MCF 10A (cell line): ENCODE measurements at regions of chr17 and their contacts with region 1.

Region 1: GRCh38 chr17:41548844-41549595 is 20.9 kb upstream of the KRT19 start:
- DNase-seq: peak; percentile 93
- H3K4me3 Mint-ChIP-seq: peak overlapping the region; percentile 47
- H3K27ac Mint-ChIP-seq: peak overlapping the region; percentile 78
- H3K4me1 Mint-ChIP-seq: peaks cover 44% of the 10 kb centered on the region
- H3K27me3 Mint-ChIP-seq: no peaks in the 10 kb centered on the region
- CTCF ChIP-seq: peak; percentile 63

Region 2: DNA sequence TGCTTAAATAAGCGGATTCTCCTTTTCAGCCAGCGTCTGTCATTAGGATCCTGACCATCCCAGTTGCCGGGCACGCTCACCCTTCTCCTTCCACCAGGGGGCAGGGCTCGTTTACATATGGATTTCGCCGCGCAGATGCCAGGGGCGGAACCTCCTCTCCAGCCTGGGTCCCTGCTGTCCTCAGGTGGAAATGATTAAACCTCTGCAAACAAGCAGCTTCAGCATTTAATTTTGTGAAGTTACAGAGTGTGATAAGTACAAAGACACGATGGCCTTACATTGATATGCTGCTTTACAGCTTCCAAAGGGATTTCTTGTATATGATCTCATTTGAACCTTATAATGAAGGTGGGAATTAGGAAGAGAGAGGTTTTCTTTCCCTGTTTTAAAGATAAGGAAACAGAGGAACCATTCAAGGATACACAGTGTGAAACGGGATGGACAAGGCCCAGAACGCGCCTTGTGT is 745.4 kb before region 1 on chr17:
- CTCF ChIA-PET with region 1: interaction called, 16 read pairs
- POLR2A ChIA-PET with region 1: no interaction called
- intact Hi-C with region 1: loop called (anchors 5 kb)
- DNase-seq: peak; percentile 84
- H3K4me3 Mint-ChIP-seq: no peak overlapping the region
- H3K27ac Mint-ChIP-seq: no peak overlapping the region
- H3K4me1 Mint-ChIP-seq: no peaks in the 10 kb centered on the region
- H3K27me3 Mint-ChIP-seq: no peaks in the 10 kb centered on the region
- CTCF ChIP-seq: peak; percentile 86

Region 3: DNA sequence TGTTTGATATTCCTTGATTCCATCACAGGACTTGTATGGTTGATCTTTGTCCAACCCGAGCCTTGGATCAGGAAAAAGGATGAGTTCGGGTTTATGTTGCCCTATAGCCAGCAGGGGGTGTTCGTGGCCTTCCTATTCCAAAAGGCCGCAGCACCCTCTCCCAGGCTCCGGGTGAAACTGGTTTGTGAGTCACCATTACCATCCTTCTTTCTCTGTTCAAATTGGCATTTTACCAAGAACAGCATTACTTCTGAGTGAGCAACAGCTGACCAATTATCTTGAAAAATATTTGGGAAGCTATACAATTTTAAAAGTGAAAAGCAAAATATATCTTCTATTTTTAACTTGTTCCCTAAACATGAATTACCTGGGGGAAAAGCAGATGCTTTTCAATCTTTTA is 639.7 kb before region 1 on chr17:
- CTCF ChIA-PET with region 1: interaction called, 48 read pairs
- POLR2A ChIA-PET with region 1: interaction called, 41 read pairs
- intact Hi-C with region 1: loop called (anchors 1 kb)
- DNase-seq: peak; percentile 96
- H3K4me3 Mint-ChIP-seq: peak overlapping the region; percentile 61
- H3K27ac Mint-ChIP-seq: peak overlapping the region; percentile 91
- H3K4me1 Mint-ChIP-seq: peaks cover 16% of the 10 kb centered on the region
- H3K27me3 Mint-ChIP-seq: no peaks in the 10 kb centered on the region
- CTCF ChIP-seq: peak; percentile 71

Region 4: GRCh38 chr17:41140360-41141132 is 408.5 kb before region 1 on chr17 and contains the start of gene KRTAP4-6:
- CTCF ChIA-PET with region 1: no interaction called
- POLR2A ChIA-PET with region 1: no interaction called
- intact Hi-C with region 1: no loop called
- DNase-seq: peak; percentile 49
- H3K4me3 Mint-ChIP-seq: no peak within 1 kb of the TSS
- H3K27ac Mint-ChIP-seq: peak within 1 kb of the TSS; percentile 3
- H3K4me1 Mint-ChIP-seq: peaks cover 6% of the 10 kb centered on the region
- H3K27me3 Mint-ChIP-seq: no peaks in the 10 kb centered on the region
- CTCF ChIP-seq: no peak
- total RNA-seq, gene KRTAP4-6: not detected in 2 replicates

Region 5: GRCh38 chr17:41496820-41497408 is 52.1 kb before region 1 on chr17:
- CTCF ChIA-PET with region 1: interaction called, 13 read pairs
- POLR2A ChIA-PET with region 1: interaction called, 3 read pairs
- intact Hi-C with region 1: loop called (anchors 1 kb)
- DNase-seq: peak; percentile 94
- H3K4me3 Mint-ChIP-seq: no peak overlapping the region
- H3K27ac Mint-ChIP-seq: peak overlapping the region; percentile 68
- H3K4me1 Mint-ChIP-seq: peaks cover 25% of the 10 kb centered on the region
- H3K27me3 Mint-ChIP-seq: no peaks in the 10 kb centered on the region
- CTCF ChIP-seq: peak; percentile 88

Region 6: GRCh38 chr17:41538565-41538991 is 10.4 kb before region 1 on chr17:
- CTCF ChIA-PET with region 1: interaction called, 44 read pairs
- POLR2A ChIA-PET with region 1: interaction called, 4 read pairs
- intact Hi-C with region 1: no loop called
- DNase-seq: peak; percentile 65
- H3K4me3 Mint-ChIP-seq: no peak overlapping the region
- H3K27ac Mint-ChIP-seq: no peak overlapping the region
- H3K4me1 Mint-ChIP-seq: peaks cover 34% of the 10 kb centered on the region
- H3K27me3 Mint-ChIP-seq: no peaks in the 10 kb centered on the region
- CTCF ChIP-seq: no peak

Region 7: GRCh38 chr17:41615454-41615853 is 66.4 kb after region 1 on chr17:
- CTCF ChIA-PET with region 1: interaction called, 22 read pairs
- POLR2A ChIA-PET with region 1: interaction called, 14 read pairs
- intact Hi-C with region 1: no loop called
- DNase-seq: peak; percentile 75
- H3K4me3 Mint-ChIP-seq: no peak overlapping the region
- H3K27ac Mint-ChIP-seq: peak overlapping the region; percentile 39
- H3K4me1 Mint-ChIP-seq: peaks cover 21% of the 10 kb centered on the region
- H3K27me3 Mint-ChIP-seq: no peaks in the 10 kb centered on the region
- CTCF ChIP-seq: no peak

Region 8: GRCh38 chr17:41665566-41666236 is 116.7 kb after region 1 on chr17:
- CTCF ChIA-PET with region 1: interaction called, 415 read pairs
- POLR2A ChIA-PET with region 1: interaction called, 39 read pairs
- intact Hi-C with region 1: loop called (anchors 1 kb)
- DNase-seq: peak; percentile 78
- H3K4me3 Mint-ChIP-seq: peak overlapping the region; percentile 70
- H3K27ac Mint-ChIP-seq: peak overlapping the region; percentile 66
- H3K4me1 Mint-ChIP-seq: peaks cover 28% of the 10 kb centered on the region
- H3K27me3 Mint-ChIP-seq: no peaks in the 10 kb centered on the region
- CTCF ChIP-seq: peak; percentile 95